Activated T-helper 1 cell treated with anti-CD3 and anti-CD28 coated beads, Interleukin-12 subunit alpha, Interleukin-12 subunit beta, Interleukin-2, Interleukin-4 antibody, amounts not matched to agents 30 ng/mL and 10 ng/mL and 1 ng/mL, durations not matched to agents 14 hours and 24 hours and 36 hours (primary cell): ENCODE measurements at regions of chr2 and their contacts with region 1.

Region 1: DNA sequence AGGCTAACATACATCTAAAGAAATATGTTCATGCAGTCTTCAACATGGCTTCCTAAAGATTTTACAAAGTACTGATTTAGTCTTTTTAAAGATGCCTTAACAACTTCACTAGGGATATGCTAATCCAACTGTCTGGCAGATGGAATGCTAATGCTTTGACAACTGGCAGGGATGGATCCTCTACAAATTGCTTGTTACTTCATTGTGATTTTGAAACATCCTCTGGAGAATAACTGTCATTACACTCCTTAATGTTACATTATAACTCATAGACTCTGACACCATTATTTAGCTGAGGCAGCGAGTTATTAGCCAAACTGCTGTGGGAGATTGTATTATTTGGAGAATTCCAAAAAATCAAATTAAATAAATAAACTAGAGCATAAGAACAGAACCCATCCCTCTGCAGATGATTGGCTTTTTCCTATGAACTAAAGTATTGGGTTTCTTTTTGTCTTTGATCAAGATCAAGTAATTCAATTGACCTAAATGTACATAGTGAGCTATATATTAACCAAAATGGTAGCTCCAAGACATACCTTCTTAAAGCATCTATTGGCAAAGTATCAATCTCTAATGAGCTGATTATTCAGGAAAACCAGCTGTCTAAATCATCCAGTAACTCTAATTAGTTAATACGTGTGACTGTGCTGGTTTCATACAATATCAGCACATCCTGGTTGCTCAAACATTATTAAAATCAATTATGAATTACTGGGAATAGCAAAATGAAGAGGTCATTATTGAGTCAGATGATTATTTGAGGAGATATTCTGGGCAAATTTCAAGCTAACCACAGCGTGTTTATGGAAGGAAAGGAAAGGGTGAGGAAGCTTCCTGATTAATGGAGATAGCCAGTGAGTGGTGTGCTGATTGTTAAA is 321.3 kb upstream of the TFPI start:
- DNase-seq: no peak
- H3K4me3 Mint-ChIP-seq: no peak overlapping the region
- H3K27ac Mint-ChIP-seq: no peak overlapping the region
- H3K4me1 Mint-ChIP-seq: no peaks in the 10 kb centered on the region
- H3K27me3 Mint-ChIP-seq: no peaks in the 10 kb centered on the region

Region 2: DNA sequence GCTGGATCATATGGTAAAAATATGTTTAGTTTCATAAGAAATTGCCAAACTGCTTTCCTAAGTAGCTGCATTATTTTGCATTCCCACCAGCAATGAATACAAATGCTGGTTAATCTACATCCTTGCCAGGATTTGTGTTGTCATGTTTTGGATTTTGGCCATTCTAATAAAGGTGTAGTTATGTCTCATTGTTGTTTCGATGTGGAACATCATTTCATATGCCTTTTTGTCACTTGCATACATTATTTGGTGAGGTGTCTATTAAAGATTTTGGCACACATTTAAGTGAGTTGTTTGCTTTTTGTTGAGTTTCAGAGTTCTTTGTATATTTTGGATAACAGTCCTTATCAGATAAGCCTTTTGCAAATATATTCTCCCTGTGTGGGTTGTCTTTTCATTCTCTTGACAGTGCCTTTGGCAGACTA is 22.1 kb before region 1 on chr2:
- intact Hi-C with region 1: loop called (anchors 1 kb)
- DNase-seq: no peak
- H3K4me3 Mint-ChIP-seq: no peak overlapping the region
- H3K27ac Mint-ChIP-seq: no peak overlapping the region
- H3K4me1 Mint-ChIP-seq: no peaks in the 10 kb centered on the region
- H3K27me3 Mint-ChIP-seq: no peaks in the 10 kb centered on the region